ENCODE measurements at regions of chr12 and their contacts with region 1.

Region 1: DNA sequence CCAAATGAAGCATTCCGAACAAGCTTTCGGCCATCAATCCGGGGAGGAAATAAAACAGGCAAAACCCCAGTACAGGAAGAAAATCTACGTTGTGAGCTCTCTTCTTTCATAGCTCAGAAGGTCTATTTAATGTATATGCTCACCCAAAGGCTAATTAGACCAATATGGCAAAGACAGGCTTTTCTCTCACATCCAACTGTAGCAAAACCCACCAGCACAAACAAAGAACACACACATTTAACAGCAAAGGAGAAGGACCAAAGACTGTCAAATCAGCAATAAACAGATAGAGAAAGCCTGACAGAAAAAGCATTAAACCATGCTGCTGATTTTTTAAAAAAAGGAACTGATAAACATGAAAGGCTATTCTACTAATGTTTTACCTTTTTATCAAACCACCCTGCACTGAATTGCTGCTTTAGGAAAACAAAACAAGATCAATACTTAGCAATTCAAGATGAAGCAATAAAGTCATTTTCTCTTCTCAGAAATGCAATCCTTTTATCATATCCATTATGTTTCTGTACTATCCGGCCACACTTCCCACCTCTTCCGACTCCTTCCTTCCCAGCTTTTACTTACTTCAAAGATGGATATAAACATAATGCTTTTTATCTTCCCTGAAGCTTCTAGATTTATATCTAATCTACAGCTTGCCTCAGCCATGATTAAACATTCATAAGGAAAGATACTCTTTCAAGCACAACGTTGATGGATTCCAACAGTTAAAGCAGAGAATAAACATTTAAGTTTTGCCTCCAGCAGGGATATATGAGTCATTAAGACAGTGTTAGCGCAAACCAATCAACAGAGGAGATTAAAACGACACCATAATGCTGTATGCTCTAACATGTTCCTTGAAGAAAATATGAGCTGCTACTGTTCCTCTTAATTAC is 74.6 kb upstream of the BBS10 start:
- DNase-seq: no peak
- ATAC-seq: no peak
- H3K4me3 ChIP-seq: no peak overlapping the region
- H3K4me3 Mint-ChIP-seq: no peak overlapping the region
- H3K27ac ChIP-seq: no peak overlapping the region
- H3K27ac Mint-ChIP-seq: peak overlapping the region in 1 of 2 donors; percentile 12
- H3K4me1 ChIP-seq: peaks cover 0 to 4% of the 10 kb centered on the region in 2 experiments
- H3K4me1 Mint-ChIP-seq: peaks cover 24 to 35% (median 26%) of the 10 kb centered on the region in 3 donors
- H3K27me3 ChIP-seq: no peaks in the 10 kb centered on the region
- H3K27me3 Mint-ChIP-seq: no peaks in the 10 kb centered on the region

Region 2: DNA sequence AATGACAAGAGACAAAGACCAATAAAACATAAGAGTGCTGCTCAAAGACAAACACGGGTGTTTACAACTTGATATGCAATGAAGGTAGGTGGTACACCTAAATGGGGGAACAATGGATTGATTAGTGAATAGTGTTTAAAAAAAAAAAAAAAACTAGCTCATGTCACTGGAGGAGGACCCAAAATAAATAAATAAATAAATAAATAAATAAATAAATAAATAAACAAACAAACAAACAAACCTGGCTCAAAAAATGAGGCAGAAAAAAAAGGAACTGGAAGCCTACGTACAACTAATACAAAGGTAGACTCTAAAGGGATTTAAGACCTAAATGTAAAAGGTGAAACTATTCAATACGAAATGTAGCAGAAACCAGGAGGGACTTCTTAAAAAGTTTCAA is 356.9 kb before region 1 on chr12:
- CTCF ChIA-PET with region 1: no interaction called
- POLR2A ChIA-PET with region 1: interaction called in 1 of 2 experiments, 10 read pairs
- DNase-seq: no peak
- ATAC-seq: no peak
- H3K4me3 ChIP-seq: no peak overlapping the region
- H3K4me3 Mint-ChIP-seq: no peak overlapping the region
- H3K27ac ChIP-seq: no peak overlapping the region
- H3K27ac Mint-ChIP-seq: no peak overlapping the region
- H3K4me1 ChIP-seq: peaks cover 0 to 5% of the 10 kb centered on the region in 2 experiments
- H3K4me1 Mint-ChIP-seq: peaks cover 47 to 52% (median 50%) of the 10 kb centered on the region in 3 donors
- H3K27me3 ChIP-seq: no peaks in the 10 kb centered on the region
- H3K27me3 Mint-ChIP-seq: no peaks in the 10 kb centered on the region